ENCODE measurements at regions of chr18 and their contacts with region 1.

Region 1: GRCh38 chr18:35949903-35950627 is 22.4 kb upstream of the RMP24 start:
- DNase-seq: peak in 1 of 2 donors; percentile 72
- H3K4me3 ChIP-seq: peak overlapping the region; percentile 46 to 63
- H3K27ac ChIP-seq: no peak overlapping the region
- H3K4me1 ChIP-seq: no peaks in the 10 kb centered on the region
- H3K27me3 ChIP-seq: no peaks in the 10 kb centered on the region
- CTCF ChIP-seq: peak; percentile 61 to 94 (median 87)

Region 2: DNA sequence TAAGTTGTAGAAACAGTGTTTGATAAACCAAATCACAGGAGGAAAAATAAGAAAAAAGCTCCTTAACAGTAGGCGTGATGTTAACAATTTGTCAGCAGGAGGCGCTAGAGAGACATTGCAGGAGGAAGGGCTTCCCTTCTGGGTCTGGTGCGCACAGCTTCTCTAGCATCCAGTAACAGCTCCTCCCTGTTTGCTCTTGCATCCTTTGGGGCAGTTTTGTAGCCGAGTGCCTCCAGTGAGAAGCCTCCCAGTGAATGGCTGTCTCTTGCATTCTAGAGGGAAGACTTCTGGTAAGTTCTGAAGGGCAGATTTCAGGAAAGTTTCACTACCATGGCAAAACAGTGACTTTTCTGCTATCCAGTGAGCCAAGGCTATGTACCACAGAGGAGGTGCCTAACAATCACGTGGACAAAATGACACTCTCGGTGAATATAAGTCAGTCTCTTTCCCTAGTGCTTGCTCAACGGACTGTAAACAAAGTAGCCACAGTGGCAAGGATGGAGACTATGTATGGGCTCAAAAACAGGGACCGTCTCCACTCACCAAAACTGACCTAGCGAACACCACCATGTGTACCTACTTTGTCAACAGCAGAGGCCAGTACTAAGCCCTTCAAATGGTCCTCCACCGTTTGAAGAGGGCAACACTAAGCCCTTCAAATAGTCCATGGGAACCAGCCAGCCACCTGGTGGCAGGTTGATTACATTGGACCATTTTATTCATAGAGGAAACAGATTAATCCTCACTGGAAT is 563.3 kb before region 1 on chr18:
- intact Hi-C with region 1: loop called (anchors 5 kb)
- DNase-seq: peak in 1 of 2 donors; percentile 82
- H3K4me3 ChIP-seq: no peak overlapping the region
- H3K27ac ChIP-seq: no peak overlapping the region
- H3K4me1 ChIP-seq: no peaks in the 10 kb centered on the region
- H3K27me3 ChIP-seq: no peaks in the 10 kb centered on the region
- CTCF ChIP-seq: peak; percentile 52 to 85 (median 78)

Region 3: GRCh38 chr18:35756506-35757117 is 193.5 kb before region 1 on chr18:
- intact Hi-C with region 1: loop called (anchors 1 kb)
- DNase-seq: no peak
- H3K4me3 ChIP-seq: no peak overlapping the region
- H3K27ac ChIP-seq: no peak overlapping the region
- H3K4me1 ChIP-seq: no peaks in the 10 kb centered on the region
- H3K27me3 ChIP-seq: no peaks in the 10 kb centered on the region
- CTCF ChIP-seq: peak; percentile 53 to 77 (median 60)

Region 4: GRCh38 chr18:35835833-35836232 is 114.2 kb before region 1 on chr18:
- intact Hi-C with region 1: no loop called
- DNase-seq: no peak
- H3K4me3 ChIP-seq: no peak overlapping the region
- H3K27ac ChIP-seq: no peak overlapping the region
- H3K4me1 ChIP-seq: no peaks in the 10 kb centered on the region
- H3K27me3 ChIP-seq: no peaks in the 10 kb centered on the region
- CTCF ChIP-seq: no peak

Measured in ascending aorta (tissue), 2 donors.